ENCODE measurements at regions of chr5 and their contacts with region 1.

Region 1: GRCh38 chr5:166123717-166124116 is 2167.7 kb upstream of the WWC1 start:
- DNase-seq: no peak
- H3K4me3 ChIP-seq: no peak overlapping the region
- CTCF ChIP-seq: no peak
- POLR2A ChIP-seq: no peak

Region 2: GRCh38 chr5:164809831-164810230 is 1313.9 kb before region 1 on chr5:
- intact Hi-C with region 1: loop called (anchors 5 kb)
- DNase-seq: no peak
- H3K4me3 ChIP-seq: no peak overlapping the region
- CTCF ChIP-seq: no peak
- POLR2A ChIP-seq: no peak

Region 3: GRCh38 chr5:165894916-165895315 is 228.8 kb before region 1 on chr5:
- intact Hi-C with region 1: no loop called
- DNase-seq: no peak
- H3K4me3 ChIP-seq: no peak overlapping the region
- CTCF ChIP-seq: no peak
- POLR2A ChIP-seq: no peak

Measured in lower leg skin (tissue), 4 donors.